Psoas muscle (tissue), 8 donors: ENCODE measurements at regions of chr3 and their contacts with region 1.

Region 1: GRCh38 chr3:43540624-43541023 is 81.2 kb downstream of the ANO10 start:
- DNase-seq: no peak
- ATAC-seq: no peak
- H3K4me3 ChIP-seq: no peak overlapping the region
- H3K27ac ChIP-seq: no peak overlapping the region
- H3K4me1 ChIP-seq: no peaks in the 10 kb centered on the region
- H3K27me3 ChIP-seq: no peaks in the 10 kb centered on the region
- CTCF ChIP-seq: no peak

Region 2: GRCh38 chr3:43597961-43598360 is 57.3 kb after region 1 on chr3:
- intact Hi-C with region 1: no loop called
- DNase-seq: no peak
- ATAC-seq: no peak
- H3K4me3 ChIP-seq: no peak overlapping the region
- H3K27ac ChIP-seq: no peak overlapping the region
- H3K4me1 ChIP-seq: no peaks in the 10 kb centered on the region
- H3K27me3 ChIP-seq: no peaks in the 10 kb centered on the region
- CTCF ChIP-seq: no peak

Region 3: GRCh38 chr3:43690400-43691119 is 149.9 kb after region 1 on chr3 and contains the start of gene ABHD5:
- intact Hi-C with region 1: loop called in 1 of 2 experiments (anchors 10 kb)
- DNase-seq: peak; percentile 91 to 96
- ATAC-seq: peak; percentile 96 to 98 (median 98)
- H3K4me3 ChIP-seq: peak within 1 kb of the TSS; percentile 80
- H3K27ac ChIP-seq: peak within 1 kb of the TSS; percentile 87
- H3K4me1 ChIP-seq: peaks cover 34% of the 10 kb centered on the region
- H3K27me3 ChIP-seq: no peaks in the 10 kb centered on the region
- CTCF ChIP-seq: peak; percentile 25
- total RNA-seq, gene ABHD5: 19.9 to 38.2 (median 25.7) TPM

Region 4: DNA sequence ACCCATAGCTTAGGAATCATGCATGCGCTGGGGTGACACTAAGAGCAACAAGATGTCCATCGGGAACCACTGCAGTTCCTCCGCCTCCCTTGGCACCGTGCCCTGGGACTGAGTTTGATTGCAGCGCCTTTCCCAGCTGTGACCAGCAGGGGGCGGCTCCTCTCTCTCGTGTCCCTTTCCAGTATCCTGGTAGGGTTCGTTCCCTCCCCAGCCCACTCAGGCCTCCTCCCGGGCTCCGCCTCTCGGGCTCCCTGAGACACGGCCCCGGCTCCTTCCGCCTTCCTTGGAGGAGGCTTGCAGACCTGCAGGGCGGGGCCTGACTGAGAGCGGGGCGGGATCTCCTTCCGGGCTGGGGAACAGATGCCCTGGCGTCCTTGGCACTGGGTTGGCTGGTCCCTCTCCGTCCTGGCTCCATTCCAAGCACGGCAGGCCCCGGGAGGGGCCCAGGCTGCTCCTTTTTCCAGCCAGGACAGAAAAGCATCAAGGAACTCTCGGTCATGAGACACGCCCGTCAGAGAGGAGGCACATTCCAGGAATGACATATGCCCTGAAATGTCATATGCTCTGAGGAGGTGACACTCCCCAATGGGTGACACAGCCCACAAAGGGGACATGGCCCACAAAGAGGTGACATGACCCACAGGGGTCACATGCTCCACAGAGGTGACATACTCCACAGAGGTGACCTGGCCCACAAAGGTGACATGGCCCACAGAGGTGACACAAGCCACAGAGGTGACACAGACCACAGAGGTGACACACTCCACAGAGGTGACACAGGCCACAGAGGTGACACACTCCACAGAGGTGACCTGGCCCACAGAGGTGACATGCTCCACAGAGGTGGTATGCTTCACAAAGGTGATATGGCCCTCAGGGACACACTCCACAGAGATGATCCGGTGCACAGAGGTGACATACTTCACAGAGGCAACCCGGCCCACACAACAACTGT is 229.1 kb after region 1 on chr3:
- intact Hi-C with region 1: loop called in 1 of 2 experiments (anchors 10 kb)
- DNase-seq: peak; percentile 96 to 98
- ATAC-seq: peak; percentile 77 to 86 (median 82)
- H3K4me3 ChIP-seq: peak overlapping the region; percentile 54
- H3K27ac ChIP-seq: peak overlapping the region; percentile 82
- H3K4me1 ChIP-seq: peaks cover 41% of the 10 kb centered on the region
- H3K27me3 ChIP-seq: no peaks in the 10 kb centered on the region
- CTCF ChIP-seq: peak; percentile 92

Region 5: GRCh38 chr3:44114142-44114541 is 573.5 kb after region 1 on chr3:
- intact Hi-C with region 1: loop called in 1 of 2 experiments (anchors 10 kb)
- DNase-seq: peak; percentile 23 to 54
- ATAC-seq: peak in 2 of 4 donors; percentile 36 to 42
- H3K4me3 ChIP-seq: no peak overlapping the region
- H3K27ac ChIP-seq: no peak overlapping the region
- H3K4me1 ChIP-seq: no peaks in the 10 kb centered on the region
- H3K27me3 ChIP-seq: peaks cover 0 to 6% (median 5%) of the 10 kb centered on the region in 3 donors
- CTCF ChIP-seq: no peak

Region 6: DNA sequence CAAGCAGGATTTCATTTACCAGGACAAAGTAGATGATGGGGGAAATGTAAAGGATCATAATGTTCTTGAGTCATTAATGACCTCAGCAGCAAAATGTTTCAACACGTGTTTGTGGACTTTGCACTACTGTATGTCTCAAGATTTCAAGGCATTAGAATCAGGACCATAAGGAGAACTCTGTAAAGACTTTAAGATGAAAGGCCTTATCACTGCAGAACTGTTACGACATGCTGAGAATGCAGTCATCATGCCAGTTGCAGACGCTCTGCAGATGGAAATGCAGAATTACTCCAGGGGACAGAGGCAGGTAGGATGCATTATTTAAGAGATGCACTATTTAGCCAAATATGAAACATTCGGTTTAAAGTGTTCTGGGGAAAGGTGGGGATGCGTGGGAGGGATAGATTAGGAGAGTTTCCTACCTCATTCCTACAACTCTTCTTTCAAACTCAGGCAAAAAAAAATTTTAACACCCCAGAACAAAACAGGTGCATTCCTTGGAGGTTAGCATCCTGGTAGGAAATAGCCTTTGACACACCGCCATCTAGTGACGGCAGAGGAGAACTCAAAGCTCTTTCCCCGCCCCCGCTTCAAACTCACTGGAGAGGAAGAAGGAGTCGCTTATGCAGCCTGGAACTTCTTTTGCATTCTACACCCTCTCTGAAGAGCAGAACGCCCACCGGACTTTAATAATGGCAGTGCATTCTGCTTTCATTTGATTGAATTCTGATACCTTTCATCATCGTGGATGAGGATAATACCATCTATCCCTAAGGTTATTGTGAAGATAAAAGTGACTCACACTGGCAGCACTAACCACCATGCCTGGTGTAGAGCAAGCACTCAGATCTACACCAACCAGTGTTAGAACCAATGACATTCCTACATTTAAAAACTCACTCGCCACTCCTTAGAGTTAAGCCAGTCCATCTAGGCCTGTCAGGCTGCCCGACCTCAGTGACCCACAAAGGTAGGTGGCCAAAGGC is 658.0 kb after region 1 on chr3:
- intact Hi-C with region 1: loop called (anchors 2 kb)
- DNase-seq: peak in 1 of 2 donors; percentile 40
- ATAC-seq: peak; percentile 64 to 89 (median 70)
- H3K4me3 ChIP-seq: no peak overlapping the region
- H3K27ac ChIP-seq: no peak overlapping the region
- H3K4me1 ChIP-seq: no peaks in the 10 kb centered on the region
- H3K27me3 ChIP-seq: no peaks in the 10 kb centered on the region
- CTCF ChIP-seq: peak; percentile 78